Activated naive CD4-positive, alpha-beta T cell treated with anti-CD3 and anti-CD28 coated beads, Interleukin-2, amount 10 ng/mL, durations not matched to agents 7 days and 5 days (primary cell): ENCODE measurements at regions of chr1 and their contacts with region 1.

Region 1: GRCh38 chr1:26417111-26417759 is 6.6 kb downstream of the LIN28A start:
- DNase-seq: peak; percentile 92
- H3K4me3 Mint-ChIP-seq: no peak overlapping the region
- H3K27ac Mint-ChIP-seq: no peak overlapping the region
- H3K4me1 Mint-ChIP-seq: peaks cover 4% of the 10 kb centered on the region
- H3K27me3 Mint-ChIP-seq: peaks cover 60% of the 10 kb centered on the region

Region 2: GRCh38 chr1:26233903-26234643 is 183.2 kb before region 1 on chr1 and contains the start of gene CEP85:
- CTCF ChIA-PET with region 1: interaction called, 23 read pairs
- DNase-seq: peak; percentile 99
- H3K4me3 Mint-ChIP-seq: peak within 1 kb of the TSS; percentile 93
- H3K27ac Mint-ChIP-seq: peak within 1 kb of the TSS; percentile 92
- H3K4me1 Mint-ChIP-seq: peaks cover 39% of the 10 kb centered on the region
- H3K27me3 Mint-ChIP-seq: peaks cover 24% of the 10 kb centered on the region

Region 3: GRCh38 chr1:26284597-26285360 is 132.5 kb before region 1 on chr1:
- CTCF ChIA-PET with region 1: interaction called, 13 read pairs
- DNase-seq: peak; percentile 96
- H3K4me3 Mint-ChIP-seq: peak overlapping the region; percentile 91
- H3K27ac Mint-ChIP-seq: peak overlapping the region; percentile 98
- H3K4me1 Mint-ChIP-seq: peaks cover 92% of the 10 kb centered on the region
- H3K27me3 Mint-ChIP-seq: no peaks in the 10 kb centered on the region

Region 4: DNA sequence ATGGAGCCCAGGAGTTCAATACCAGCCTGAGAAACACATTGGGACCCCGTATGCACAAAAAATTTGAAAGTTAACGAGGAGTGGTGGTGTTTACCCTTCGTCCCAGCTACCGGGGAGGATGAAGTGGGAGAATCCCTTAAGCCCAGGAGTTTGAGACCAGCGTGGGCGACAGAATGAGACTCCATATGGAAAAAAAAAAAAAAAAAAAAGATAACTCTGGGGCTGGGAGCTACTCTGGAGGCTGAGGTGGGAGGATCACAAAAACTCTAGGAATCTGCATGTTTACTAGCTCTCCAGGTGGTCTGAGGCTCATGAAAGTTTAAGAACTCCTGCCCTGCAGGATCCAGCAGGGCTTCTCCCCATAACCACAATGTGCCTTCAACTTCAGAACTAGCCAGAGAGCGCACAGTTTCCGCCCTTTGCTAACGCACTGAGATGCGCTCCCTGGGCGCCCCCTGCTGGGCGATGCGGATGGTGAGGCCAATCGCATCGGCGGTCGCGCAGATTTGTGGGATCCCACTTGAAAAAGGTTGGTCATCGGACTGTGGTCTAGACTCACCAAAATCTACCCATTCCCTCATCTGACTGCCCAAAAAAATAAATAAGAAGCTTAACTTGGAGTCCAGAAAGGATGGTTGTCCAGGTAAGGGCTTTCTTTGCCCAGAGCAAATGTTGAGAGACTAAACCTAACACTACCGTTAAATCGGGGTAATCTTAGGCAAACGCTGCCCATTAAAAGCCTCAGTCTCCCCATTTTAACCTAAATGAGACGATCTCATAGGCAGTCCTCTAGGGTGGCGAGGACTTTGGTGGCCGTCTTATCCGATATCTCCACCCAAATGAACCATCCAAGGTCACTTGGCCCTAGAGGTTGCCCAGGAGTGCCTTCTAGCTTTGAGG is 53.4 kb before region 1 on chr1:
- CTCF ChIA-PET with region 1: interaction called, 11 read pairs
- DNase-seq: peak; percentile 90
- H3K4me3 Mint-ChIP-seq: no peak overlapping the region
- H3K27ac Mint-ChIP-seq: no peak overlapping the region
- H3K4me1 Mint-ChIP-seq: peaks cover 47% of the 10 kb centered on the region
- H3K27me3 Mint-ChIP-seq: peaks cover 79% of the 10 kb centered on the region

Region 5: GRCh38 chr1:26399034-26399433 is 18.2 kb before region 1 on chr1:
- CTCF ChIA-PET with region 1: interaction called, 19 read pairs
- DNase-seq: no peak
- H3K4me3 Mint-ChIP-seq: no peak overlapping the region
- H3K27ac Mint-ChIP-seq: no peak overlapping the region
- H3K4me1 Mint-ChIP-seq: peaks cover 7% of the 10 kb centered on the region
- H3K27me3 Mint-ChIP-seq: peaks cover 27% of the 10 kb centered on the region